Activated CD4-positive, alpha-beta memory T cell treated with anti-CD3 and anti-CD28 coated beads for 36 hours (primary cell): ENCODE measurements at regions of chr16 and their contacts with region 1.

Region 1: DNA sequence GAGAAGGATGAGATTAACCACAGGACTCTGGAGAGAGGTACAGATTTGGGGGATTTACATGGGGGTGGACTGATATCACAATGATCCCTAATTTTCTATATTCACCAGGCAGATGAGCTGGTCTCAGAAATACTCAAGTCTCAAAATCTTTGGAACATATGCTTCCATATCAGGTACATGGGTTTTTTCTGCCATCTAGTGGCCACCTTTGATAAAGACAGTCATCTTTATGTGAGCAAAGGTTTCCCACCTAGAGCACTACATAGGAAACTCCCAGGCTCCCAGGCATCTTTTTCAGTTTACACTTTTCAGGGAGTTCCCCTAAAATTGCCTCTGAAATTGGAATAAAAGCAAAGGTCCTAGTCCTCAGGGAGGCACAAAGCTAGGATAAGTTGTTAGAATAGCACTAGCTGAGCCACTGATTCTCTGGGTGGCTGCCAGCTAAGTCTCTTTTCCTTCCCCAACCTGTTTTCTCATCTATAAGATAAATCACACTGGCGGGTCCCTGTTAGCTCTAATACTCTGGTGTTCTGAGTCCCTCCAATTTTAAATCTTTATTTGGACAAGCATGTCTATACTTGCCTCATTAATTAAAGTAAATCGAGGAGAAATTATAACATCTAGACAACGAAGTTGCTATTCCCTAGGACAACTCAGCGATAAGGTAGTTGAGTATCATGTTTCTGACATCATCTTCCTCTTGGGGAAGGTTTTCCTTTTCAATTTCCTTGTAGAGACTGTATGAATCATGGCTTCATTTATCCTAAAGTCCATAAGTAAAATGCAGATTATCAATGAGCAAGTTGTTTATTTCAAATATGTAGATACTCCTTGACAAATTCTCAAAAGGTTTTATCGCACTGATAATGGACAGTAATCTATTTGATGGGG is 19.0 kb upstream of the MON1B start:
- DNase-seq: no peak
- H3K4me3 Mint-ChIP-seq: no peak overlapping the region
- H3K27ac Mint-ChIP-seq: no peak overlapping the region
- H3K4me1 Mint-ChIP-seq: no peaks in the 10 kb centered on the region
- H3K27me3 Mint-ChIP-seq: peaks cover 35% of the 10 kb centered on the region

Region 2: DNA sequence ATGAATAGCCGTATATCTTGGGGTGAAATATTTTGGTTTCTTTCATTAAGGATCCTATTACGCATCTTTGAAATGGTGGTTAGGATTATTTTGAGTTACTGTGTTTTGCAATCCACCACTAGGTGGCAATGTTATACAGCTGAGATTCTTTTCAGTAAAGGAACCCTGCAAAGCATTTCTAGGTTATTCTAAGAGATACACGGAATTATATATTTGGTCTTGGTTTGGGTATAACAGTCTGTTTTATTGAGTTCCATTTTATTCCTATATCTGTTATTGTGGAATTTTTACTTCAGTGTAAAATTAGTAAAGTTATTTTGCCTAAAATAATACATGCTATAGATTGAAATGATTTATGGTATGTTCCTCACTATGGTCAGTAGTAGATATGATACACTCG is 1382.8 kb before region 1 on chr16:
- CTCF ChIA-PET with region 1: interaction called, 33 read pairs
- POLR2A ChIA-PET with region 1: no interaction called
- intact Hi-C with region 1: loop called (anchors 1 kb)
- DNase-seq: no peak
- H3K4me3 Mint-ChIP-seq: no peak overlapping the region
- H3K27ac Mint-ChIP-seq: no peak overlapping the region
- H3K4me1 Mint-ChIP-seq: no peaks in the 10 kb centered on the region
- H3K27me3 Mint-ChIP-seq: peaks cover 6% of the 10 kb centered on the region

Region 3: GRCh38 chr16:75794426-75794825 is 1377.6 kb before region 1 on chr16:
- CTCF ChIA-PET with region 1: interaction called, 10 read pairs
- POLR2A ChIA-PET with region 1: no interaction called
- intact Hi-C with region 1: loop called (anchors 1 kb)
- DNase-seq: no peak
- H3K4me3 Mint-ChIP-seq: no peak overlapping the region
- H3K27ac Mint-ChIP-seq: no peak overlapping the region
- H3K4me1 Mint-ChIP-seq: no peaks in the 10 kb centered on the region
- H3K27me3 Mint-ChIP-seq: peaks cover 5% of the 10 kb centered on the region

Region 4: DNA sequence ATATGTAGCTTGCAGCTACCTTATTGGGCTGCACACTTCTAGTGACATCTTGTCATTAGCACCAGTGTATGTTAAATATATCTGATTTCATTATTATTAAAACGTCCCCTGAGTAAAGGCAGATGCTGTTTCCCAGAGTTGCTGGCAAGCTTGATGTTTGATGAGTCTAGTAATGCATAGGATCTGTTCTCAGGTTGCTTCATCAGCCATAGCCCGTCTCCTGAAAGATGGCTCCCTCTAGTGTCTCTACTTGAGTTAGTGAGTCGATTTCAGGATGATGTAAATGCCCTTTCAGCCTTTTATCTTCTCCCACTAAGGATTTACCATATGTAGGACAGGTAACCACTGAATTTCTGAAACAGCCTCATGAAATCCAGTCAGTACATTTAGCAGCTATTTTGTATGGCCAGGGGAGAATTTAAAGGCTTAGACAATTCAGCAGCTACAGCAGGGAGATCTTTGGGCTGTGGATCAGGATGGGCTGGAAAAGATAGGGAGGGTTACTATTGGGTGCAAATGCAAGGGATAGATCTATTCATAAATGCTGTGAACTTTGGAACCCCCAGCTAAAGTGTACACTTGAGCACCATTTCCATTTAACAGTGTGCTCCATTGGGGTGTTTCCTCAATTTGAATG is 518.5 kb before region 1 on chr16:
- CTCF ChIA-PET with region 1: interaction called, 3 read pairs
- POLR2A ChIA-PET with region 1: no interaction called
- intact Hi-C with region 1: loop called (anchors 10 kb)
- DNase-seq: no peak
- H3K4me3 Mint-ChIP-seq: no peak overlapping the region
- H3K27ac Mint-ChIP-seq: no peak overlapping the region
- H3K4me1 Mint-ChIP-seq: no peaks in the 10 kb centered on the region
- H3K27me3 Mint-ChIP-seq: no peaks in the 10 kb centered on the region

Region 5: GRCh38 chr16:77157346-77158058 is 14.5 kb before region 1 on chr16:
- CTCF ChIA-PET with region 1: interaction called, 12 read pairs
- POLR2A ChIA-PET with region 1: no interaction called
- intact Hi-C with region 1: no loop called
- DNase-seq: no peak
- H3K4me3 Mint-ChIP-seq: no peak overlapping the region
- H3K27ac Mint-ChIP-seq: no peak overlapping the region
- H3K4me1 Mint-ChIP-seq: no peaks in the 10 kb centered on the region
- H3K27me3 Mint-ChIP-seq: peaks cover 20% of the 10 kb centered on the region